Adrenal gland (tissue), 19 donors: ENCODE measurements at regions of chr14 and their contacts with region 1.

Region 1: DNA sequence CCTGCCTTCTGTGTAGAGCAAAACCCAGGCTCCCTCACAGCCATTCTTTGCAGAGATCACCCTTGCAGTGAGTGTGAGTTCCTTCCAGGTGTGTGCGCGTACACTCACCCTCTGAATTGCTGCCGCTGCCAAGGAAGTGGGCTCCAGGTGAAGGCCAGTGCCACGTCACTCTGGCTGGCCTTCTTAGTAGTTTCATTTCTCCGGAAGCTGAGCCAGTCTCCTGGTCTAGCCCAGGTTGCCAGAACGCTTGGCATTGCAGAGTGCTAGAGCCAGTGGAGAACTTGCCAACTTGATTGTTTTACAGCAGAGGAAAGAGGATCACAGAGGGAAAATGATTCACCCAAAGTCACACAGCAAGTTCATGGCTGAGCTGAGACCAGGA is 11.0 kb downstream of the CBLN3 start:
- DNase-seq: peak; percentile 69 to 89 (median 87)
- H3K4me3 ChIP-seq: no peak overlapping the region
- H3K27ac ChIP-seq: peak overlapping the region in 2 of 5 donors; percentile 38 to 67
- H3K4me1 ChIP-seq: peaks cover 5 to 17% of the 10 kb centered on the region in 2 donors
- H3K27me3 ChIP-seq: no peaks in the 10 kb centered on the region
- CTCF ChIP-seq: no peak
- POLR2A ChIP-seq: peak in 1 of 2 donors; percentile 9

Region 2: DNA sequence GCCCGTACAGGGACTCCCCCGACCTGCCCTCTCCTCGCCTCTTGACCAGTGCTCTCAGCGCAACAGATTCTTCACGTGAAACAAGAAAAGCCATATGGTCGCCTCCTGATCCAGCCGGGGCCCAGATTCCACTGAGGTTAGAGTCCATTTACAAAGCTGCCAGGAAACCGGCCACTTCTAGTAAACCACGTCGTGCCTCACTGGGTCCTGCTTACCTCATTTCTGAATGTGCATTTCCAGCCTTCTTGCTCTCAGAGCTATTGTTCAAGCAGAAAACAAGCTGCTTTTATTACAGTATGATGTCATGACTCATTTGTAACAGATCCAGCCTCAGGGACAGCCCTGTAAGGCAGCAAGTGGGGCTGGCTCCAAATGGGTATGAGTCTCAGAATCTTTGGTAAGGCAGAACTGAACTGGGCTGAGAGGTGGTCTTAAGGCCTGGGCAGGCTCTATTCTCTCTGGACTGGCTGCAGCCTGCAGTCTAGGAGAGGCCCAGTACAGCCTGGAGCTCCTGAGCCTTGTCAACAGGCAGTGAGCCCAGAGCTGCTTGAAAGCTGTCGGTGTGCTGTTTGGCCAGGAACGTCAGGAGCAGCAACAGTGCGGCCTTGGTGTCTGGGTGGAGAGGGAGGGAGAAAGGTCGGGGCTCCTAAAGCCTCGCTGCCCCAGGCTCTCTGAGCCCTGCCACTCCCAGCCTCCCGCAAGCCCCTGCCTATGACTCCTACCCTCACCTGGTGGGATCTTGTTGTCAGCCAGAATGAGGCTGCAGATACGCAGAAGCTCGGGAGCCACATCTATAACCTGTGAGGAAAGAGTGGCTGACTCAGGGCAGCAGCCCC is 238.3 kb before region 1 on chr14:
- intact Hi-C with region 1: no loop called
- DNase-seq: peak; percentile 57 to 81 (median 74)
- H3K4me3 ChIP-seq: no peak overlapping the region
- H3K27ac ChIP-seq: peak overlapping the region; percentile 59 to 92 (median 89)
- H3K4me1 ChIP-seq: peaks cover 13 to 23% of the 10 kb centered on the region in 2 donors
- H3K27me3 ChIP-seq: no peaks in the 10 kb centered on the region
- CTCF ChIP-seq: no peak
- POLR2A ChIP-seq: peak in 1 of 2 donors; percentile 53

Region 3: DNA sequence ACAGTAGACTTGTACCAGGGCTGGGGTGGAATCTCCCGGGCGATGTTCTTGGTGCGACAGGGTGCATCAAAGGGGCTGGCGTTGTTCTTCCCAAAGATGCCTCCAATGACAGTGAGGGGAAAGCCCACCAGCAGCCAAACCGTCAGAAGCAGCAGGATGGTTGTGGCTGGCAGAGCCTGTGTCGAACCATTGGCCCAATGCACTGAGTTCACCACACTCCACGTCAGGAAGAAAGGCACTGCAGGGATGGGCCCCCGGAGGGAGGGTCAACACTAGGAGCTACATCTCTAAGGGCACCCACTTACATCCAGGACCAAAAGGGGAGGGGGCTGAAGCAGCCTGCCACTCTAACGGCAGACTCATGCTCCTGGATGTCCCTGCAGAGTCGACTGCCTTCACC is 228.1 kb before region 1 on chr14:
- intact Hi-C with region 1: no loop called
- DNase-seq: no peak
- H3K4me3 ChIP-seq: no peak overlapping the region
- H3K27ac ChIP-seq: no peak overlapping the region
- H3K4me1 ChIP-seq: peaks cover 17 to 26% of the 10 kb centered on the region in 2 donors
- H3K27me3 ChIP-seq: no peaks in the 10 kb centered on the region
- CTCF ChIP-seq: no peak
- POLR2A ChIP-seq: no peak

Region 4: GRCh38 chr14:24366721-24367513 is 51.6 kb before region 1 on chr14:
- intact Hi-C with region 1: loop called in 1 of 2 experiments (anchors 5 kb)
- DNase-seq: peak; percentile 89 to 92 (median 91)
- H3K4me3 ChIP-seq: peak overlapping the region in 2 of 4 donors; percentile 56 to 83
- H3K27ac ChIP-seq: peak overlapping the region; percentile 84 to 97 (median 88)
- H3K4me1 ChIP-seq: peaks cover 11 to 27% of the 10 kb centered on the region in 2 donors
- H3K27me3 ChIP-seq: no peaks in the 10 kb centered on the region
- CTCF ChIP-seq: peak in 1 of 6 experiments; percentile 3
- POLR2A ChIP-seq: peak in 1 of 2 donors; percentile 73

Region 5: GRCh38 chr14:24381363-24382063 is 37.0 kb before region 1 on chr14:
- intact Hi-C with region 1: no loop called
- DNase-seq: no peak
- H3K4me3 ChIP-seq: no peak overlapping the region
- H3K27ac ChIP-seq: peak overlapping the region in 2 of 5 donors; percentile 22 to 29
- H3K4me1 ChIP-seq: no peaks in the 10 kb centered on the region
- H3K27me3 ChIP-seq: no peaks in the 10 kb centered on the region
- CTCF ChIP-seq: no peak
- POLR2A ChIP-seq: no peak